ENCODE measurements at regions of chr9 and their contacts with region 1.

Region 1: GRCh38 chr9:9612270-9612669 is 1000.5 kb downstream of the PTPRD start:
- DNase-seq: no peak
- ATAC-seq: no peak
- H3K4me3 ChIP-seq: no peak overlapping the region
- H3K27ac ChIP-seq: no peak overlapping the region
- H3K4me1 ChIP-seq: no peaks in the 10 kb centered on the region
- H3K27me3 ChIP-seq: no peaks in the 10 kb centered on the region
- CTCF ChIP-seq: no peak
- POLR2A ChIP-seq: no peak

Region 2: GRCh38 chr9:9783711-9784110 is 171.4 kb after region 1 on chr9:
- intact Hi-C with region 1: loop called in 1 of 2 experiments (anchors 10 kb)
- DNase-seq: no peak
- ATAC-seq: no peak
- H3K4me3 ChIP-seq: no peak overlapping the region
- H3K27ac ChIP-seq: no peak overlapping the region
- H3K4me1 ChIP-seq: no peaks in the 10 kb centered on the region
- H3K27me3 ChIP-seq: no peaks in the 10 kb centered on the region
- CTCF ChIP-seq: no peak
- POLR2A ChIP-seq: no peak

Measured in right lobe of liver (tissue), 6 donors.